HCT116 (cell line): ENCODE measurements at regions of chr5 and their contacts with region 1.

Region 1: GRCh38 chr5:170267431-170268152 is 30.0 kb downstream of the LCP2 start:
- DNase-seq: peak; percentile 37
- ATAC-seq: peak; percentile 97
- H3K4me3 ChIP-seq: no peak overlapping the region
- H3K27ac ChIP-seq: no peak overlapping the region
- H3K4me1 ChIP-seq: no peaks in the 10 kb centered on the region
- H3K27me3 ChIP-seq: peaks cover 43% of the 10 kb centered on the region
- CTCF ChIP-seq: peak; percentile 82 to 85 (median 84)
- POLR2A ChIP-seq: no peak
- RAD21 ChIP-seq: peak; percentile 56

Region 2: DNA sequence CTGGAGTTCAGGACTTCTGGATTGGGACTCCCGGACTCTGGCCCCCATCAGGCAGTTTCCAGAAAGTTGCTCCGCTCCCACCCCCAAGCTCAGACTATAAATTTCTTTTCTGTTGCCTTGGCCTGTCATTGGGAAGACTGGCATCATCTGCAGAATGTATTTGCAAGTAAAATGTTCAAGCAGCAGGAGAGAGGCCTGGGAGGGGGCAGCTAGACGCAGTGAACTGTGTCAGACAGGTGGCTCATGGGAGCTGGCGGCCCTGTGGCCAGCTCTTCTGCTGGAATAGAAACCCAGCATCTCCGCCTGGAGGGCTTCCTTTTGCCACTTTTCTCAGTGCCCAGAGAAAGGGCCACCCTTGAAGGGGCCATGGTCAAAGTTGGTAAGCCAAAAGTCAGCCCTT is 303.3 kb before region 1 on chr5:
- CTCF ChIA-PET with region 1: no interaction called
- POLR2A ChIA-PET with region 1: no interaction called
- RAD21 ChIA-PET with region 1: no interaction called
- intact Hi-C with region 1: no loop called
- DNase-seq: no peak
- ATAC-seq: no peak
- H3K4me3 ChIP-seq: no peak overlapping the region
- H3K27ac ChIP-seq: no peak overlapping the region
- H3K4me1 ChIP-seq: no peaks in the 10 kb centered on the region
- H3K27me3 ChIP-seq: peaks cover 41% of the 10 kb centered on the region
- CTCF ChIP-seq: no peak
- POLR2A ChIP-seq: no peak
- RAD21 ChIP-seq: no peak

Region 3: GRCh38 chr5:170338933-170339779 is 71.6 kb after region 1 on chr5:
- CTCF ChIA-PET with region 1: interaction called, 30 read pairs
- POLR2A ChIA-PET with region 1: no interaction called
- RAD21 ChIA-PET with region 1: interaction called, 3 read pairs
- intact Hi-C with region 1: loop called (anchors 1 kb)
- DNase-seq: peak; percentile 13
- ATAC-seq: peak; percentile 95
- H3K4me3 ChIP-seq: no peak overlapping the region
- H3K27ac ChIP-seq: no peak overlapping the region
- H3K4me1 ChIP-seq: no peaks in the 10 kb centered on the region
- H3K27me3 ChIP-seq: peaks cover 38% of the 10 kb centered on the region
- CTCF ChIP-seq: peak; percentile 79 to 99 (median 81)
- POLR2A ChIP-seq: no peak
- RAD21 ChIP-seq: peak; percentile 88

Region 4: GRCh38 chr5:170380361-170380951 is 112.9 kb after region 1 on chr5:
- CTCF ChIA-PET with region 1: no interaction called
- POLR2A ChIA-PET with region 1: no interaction called
- RAD21 ChIA-PET with region 1: no interaction called
- intact Hi-C with region 1: no loop called
- DNase-seq: no peak
- ATAC-seq: no peak
- H3K4me3 ChIP-seq: no peak overlapping the region
- H3K27ac ChIP-seq: no peak overlapping the region
- H3K4me1 ChIP-seq: no peaks in the 10 kb centered on the region
- H3K27me3 ChIP-seq: peaks cover 35% of the 10 kb centered on the region
- CTCF ChIP-seq: no peak
- POLR2A ChIP-seq: no peak
- RAD21 ChIP-seq: no peak